Activated CD4-positive, alpha-beta T cell treated with anti-CD3 and anti-CD28 coated beads, Interleukin-2, amount 10 ng/mL, durations not matched to agents 24 days and 14 days (primary cell): ENCODE measurements at regions of chr1 and their contacts with region 1.

Region 1: GRCh38 chr1:67230539-67230938 is 64.3 kb downstream of the IL23R start:
- DNase-seq: no peak
- H3K4me3 Mint-ChIP-seq: no peak overlapping the region
- H3K27ac Mint-ChIP-seq: no peak overlapping the region
- H3K4me1 Mint-ChIP-seq: peaks cover 9% of the 10 kb centered on the region
- H3K27me3 Mint-ChIP-seq: no peaks in the 10 kb centered on the region

Region 2: GRCh38 chr1:67264899-67265298 is 34.4 kb after region 1 on chr1:
- intact Hi-C with region 1: loop called (anchors 2 kb)
- DNase-seq: no peak
- H3K4me3 Mint-ChIP-seq: peak overlapping the region; percentile 18
- H3K27ac Mint-ChIP-seq: peak overlapping the region; percentile 67
- H3K4me1 Mint-ChIP-seq: peaks cover 23% of the 10 kb centered on the region
- H3K27me3 Mint-ChIP-seq: no peaks in the 10 kb centered on the region

Region 3: GRCh38 chr1:67307251-67308060 is 76.9 kb after region 1 on chr1 and contains the start of gene IL12RB2:
- intact Hi-C with region 1: no loop called
- DNase-seq: peak; percentile 93
- H3K4me3 Mint-ChIP-seq: peak within 1 kb of the TSS; percentile 97
- H3K27ac Mint-ChIP-seq: peak within 1 kb of the TSS; percentile 100
- H3K4me1 Mint-ChIP-seq: peaks cover 64% of the 10 kb centered on the region
- H3K27me3 Mint-ChIP-seq: no peaks in the 10 kb centered on the region
- total RNA-seq, gene IL12RB2: 138 and 146 TPM in 2 replicates